Gastrocnemius medialis (tissue), 4 donors: ENCODE measurements at regions of chr5 and their contacts with region 1.

Region 1: DNA sequence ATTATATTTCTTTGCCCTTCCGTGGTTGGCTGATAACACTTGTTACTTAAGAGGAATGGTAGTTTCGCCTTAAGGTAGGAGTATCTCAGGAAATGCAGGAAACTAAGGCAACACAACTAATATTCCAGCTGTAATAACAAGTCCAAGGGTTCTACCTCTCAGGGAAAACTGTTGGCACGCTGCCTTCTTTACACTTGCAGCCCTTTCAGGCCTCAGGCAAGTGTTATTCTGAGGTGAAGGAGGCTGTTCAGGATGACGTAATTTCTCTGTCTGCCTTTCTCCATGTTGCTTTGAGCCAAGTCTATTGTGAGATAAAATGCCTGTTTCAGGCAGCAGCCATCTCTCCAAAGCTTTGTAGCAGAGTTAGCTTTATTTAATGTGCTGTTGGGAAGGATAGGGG is 38.0 kb downstream of the VCAN start:
- DNase-seq: no peak
- ATAC-seq: no peak
- H3K4me3 ChIP-seq: no peak overlapping the region
- H3K27ac ChIP-seq: no peak overlapping the region
- H3K4me1 ChIP-seq: no peaks in the 10 kb centered on the region
- H3K27me3 ChIP-seq: no peaks in the 10 kb centered on the region
- CTCF ChIP-seq: no peak
- POLR2A ChIP-seq: no peak

Region 2: GRCh38 chr5:83179966-83180365 is 329.6 kb before region 1 on chr5:
- in situ Hi-C with region 1: no loop called
- intact Hi-C with region 1: loop called (anchors 5 kb)
- DNase-seq: no peak
- ATAC-seq: no peak
- H3K4me3 ChIP-seq: no peak overlapping the region
- H3K27ac ChIP-seq: no peak overlapping the region
- H3K4me1 ChIP-seq: no peaks in the 10 kb centered on the region
- H3K27me3 ChIP-seq: no peaks in the 10 kb centered on the region
- CTCF ChIP-seq: no peak
- POLR2A ChIP-seq: no peak